ENCODE measurements at regions of chr3 and their contacts with region 1.

Region 1: GRCh38 chr3:177057768-177058167 is 139.5 kb downstream of the TBL1XR1 start:
- DNase-seq: peak; percentile 80
- H3K4me3 Mint-ChIP-seq: no peak overlapping the region
- H3K27ac Mint-ChIP-seq: no peak overlapping the region
- H3K4me1 Mint-ChIP-seq: peaks cover 39% of the 10 kb centered on the region
- H3K27me3 Mint-ChIP-seq: no peaks in the 10 kb centered on the region

Region 2: DNA sequence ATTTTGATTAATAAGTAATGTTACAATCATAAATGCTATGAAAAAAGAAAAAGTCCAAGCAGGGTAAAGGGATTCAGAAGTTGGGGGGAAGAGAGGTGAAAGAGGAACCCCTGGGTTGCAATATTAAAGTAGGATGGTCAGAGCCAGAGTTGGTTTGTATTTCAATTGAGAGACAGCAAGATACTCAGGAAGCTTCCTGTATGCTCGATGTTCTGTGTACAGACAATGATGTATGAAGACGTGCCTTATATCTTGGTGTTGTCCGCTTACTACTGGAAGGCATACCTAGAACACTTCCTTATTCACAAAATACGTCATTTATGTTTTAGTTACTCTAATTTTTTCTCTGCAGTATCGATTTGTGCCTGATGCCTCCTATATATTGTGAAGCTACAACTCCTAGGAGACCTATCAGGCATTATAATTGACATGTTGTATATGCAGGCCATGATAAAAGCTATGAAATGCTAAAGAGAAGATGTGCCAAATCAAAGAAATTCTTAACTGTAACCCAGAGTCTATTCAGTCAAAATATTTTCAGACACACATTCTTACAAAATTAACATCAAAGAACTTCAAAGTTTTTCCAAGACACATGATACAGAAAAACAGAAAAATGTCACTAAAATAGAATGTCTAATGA is 52.0 kb after region 1 on chr3:
- CTCF ChIA-PET with region 1: no interaction called
- POLR2A ChIA-PET with region 1: no interaction called
- intact Hi-C with region 1: loop called (anchors 5 kb)
- DNase-seq: no peak
- H3K4me3 Mint-ChIP-seq: no peak overlapping the region
- H3K27ac Mint-ChIP-seq: no peak overlapping the region
- H3K4me1 Mint-ChIP-seq: peaks cover 68% of the 10 kb centered on the region
- H3K27me3 Mint-ChIP-seq: no peaks in the 10 kb centered on the region

Region 3: GRCh38 chr3:177144923-177145780 is 87.4 kb after region 1 on chr3:
- CTCF ChIA-PET with region 1: interaction called, 3 read pairs
- POLR2A ChIA-PET with region 1: interaction called, 3 read pairs
- intact Hi-C with region 1: loop called (anchors 1 kb)
- DNase-seq: no peak
- H3K4me3 Mint-ChIP-seq: peak overlapping the region; percentile 34
- H3K27ac Mint-ChIP-seq: peak overlapping the region; percentile 66
- H3K4me1 Mint-ChIP-seq: peaks cover 67% of the 10 kb centered on the region
- H3K27me3 Mint-ChIP-seq: no peaks in the 10 kb centered on the region

Region 4: DNA sequence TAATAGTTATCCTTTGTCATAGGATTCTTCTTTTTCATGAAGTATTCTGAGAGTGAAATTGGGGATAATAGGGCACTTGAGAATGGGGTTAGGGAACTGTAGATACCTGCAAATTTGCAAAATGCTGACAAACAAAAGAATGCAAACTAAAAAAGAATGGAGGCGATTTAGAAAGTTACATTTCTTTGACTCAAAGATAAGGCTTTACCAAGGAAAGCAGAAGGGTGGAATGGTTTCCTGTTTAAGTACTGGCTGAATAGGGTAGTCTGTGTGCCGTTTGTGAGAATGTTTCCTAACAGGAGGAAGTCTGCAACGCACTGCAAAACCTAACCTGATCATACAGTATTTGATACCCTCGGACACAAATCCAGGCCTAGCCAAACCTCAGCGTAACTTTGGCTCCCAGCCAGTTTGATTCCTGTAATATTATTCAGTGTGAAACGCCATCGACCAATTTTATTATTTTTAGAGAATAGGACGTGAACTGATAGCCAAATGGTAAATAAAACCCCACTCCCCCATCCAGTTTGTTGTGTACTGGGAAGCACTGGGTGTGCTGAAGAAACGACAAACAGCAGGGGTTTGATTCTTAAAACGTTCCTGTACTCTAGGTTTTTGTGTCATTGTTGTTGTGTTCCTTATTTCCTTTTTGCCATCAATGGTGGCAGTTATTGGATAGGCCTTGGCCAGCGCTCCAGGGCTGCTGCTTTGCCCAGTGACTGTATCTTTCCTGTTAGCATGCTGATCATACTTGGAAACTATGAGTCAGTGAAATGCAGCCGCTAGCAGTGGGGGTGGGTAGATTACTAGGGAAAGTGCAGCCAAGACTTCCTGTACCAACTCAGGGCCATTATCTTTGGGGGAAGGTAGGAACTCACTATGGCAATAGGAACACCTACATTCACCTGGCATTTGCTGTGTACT is 287.5 kb after region 1 on chr3:
- CTCF ChIA-PET with region 1: no interaction called
- POLR2A ChIA-PET with region 1: no interaction called
- intact Hi-C with region 1: loop called (anchors 1 kb)
- DNase-seq: peak; percentile 86
- H3K4me3 Mint-ChIP-seq: peak overlapping the region; percentile 20
- H3K27ac Mint-ChIP-seq: peak overlapping the region; percentile 90
- H3K4me1 Mint-ChIP-seq: peaks cover 40% of the 10 kb centered on the region
- H3K27me3 Mint-ChIP-seq: no peaks in the 10 kb centered on the region